WTC11 (cell line): ENCODE measurements at regions of chr6 and their contacts with region 1.

Region 1: DNA sequence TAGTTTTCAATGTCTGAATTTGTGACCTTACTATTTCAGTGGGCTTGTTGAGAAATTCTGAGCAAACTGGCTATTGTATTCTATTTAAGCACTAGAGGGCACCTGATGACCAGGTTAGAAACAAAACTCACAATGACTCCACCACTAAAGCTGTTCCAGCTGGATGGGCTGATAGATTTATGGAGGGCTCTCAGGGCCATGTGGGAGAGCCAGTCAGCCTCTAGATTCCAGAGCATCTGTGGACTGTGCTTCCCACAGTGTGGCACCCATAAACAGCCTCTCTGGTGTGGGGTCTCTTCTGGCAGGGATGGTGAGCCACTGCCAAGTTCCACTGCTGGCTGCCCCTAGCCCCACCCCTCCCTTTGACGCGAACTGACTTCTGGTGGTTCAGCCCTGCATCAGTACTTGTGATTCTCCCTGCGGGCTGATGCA is 29.2 kb downstream of the C6orf58 start:
- DNase-seq: peak; percentile 24
- ATAC-seq: peak; percentile 94
- H3K4me3 Mint-ChIP-seq: no peak overlapping the region
- H3K27ac Mint-ChIP-seq: no peak overlapping the region
- H3K4me1 Mint-ChIP-seq: no peaks in the 10 kb centered on the region
- H3K27me3 Mint-ChIP-seq: no peaks in the 10 kb centered on the region
- CTCF ChIP-seq: no peak

Region 2: GRCh38 chr6:125834348-125834747 is 1771.8 kb before region 1 on chr6:
- CTCF ChIA-PET with region 1: no interaction called
- POLR2A ChIA-PET with region 1: no interaction called
- DNase-seq: no peak
- ATAC-seq: no peak
- H3K4me3 Mint-ChIP-seq: no peak overlapping the region
- H3K27ac Mint-ChIP-seq: no peak overlapping the region
- H3K4me1 Mint-ChIP-seq: peaks cover 20% of the 10 kb centered on the region
- H3K27me3 Mint-ChIP-seq: no peaks in the 10 kb centered on the region
- CTCF ChIP-seq: no peak

Region 3: GRCh38 chr6:127266178-127266891 is 339.8 kb before region 1 on chr6 and contains the start of gene RNF146:
- CTCF ChIA-PET with region 1: no interaction called
- POLR2A ChIA-PET with region 1: no interaction called
- DNase-seq: peak; percentile 73
- ATAC-seq: peak; percentile 70
- H3K4me3 Mint-ChIP-seq: peak within 1 kb of the TSS; percentile 99
- H3K27ac Mint-ChIP-seq: peak within 1 kb of the TSS; percentile 100
- H3K4me1 Mint-ChIP-seq: peaks cover 29% of the 10 kb centered on the region
- H3K27me3 Mint-ChIP-seq: no peaks in the 10 kb centered on the region; the same call in 1 of the 2 replicates
- CTCF ChIP-seq: 0 out of 2 replicates have a peak, but pooled peaks have one; percentile 34
- total RNA-seq, gene RNF146: 27.3 to 30.4 TPM (median 30.0 TPM) in 3 replicates

Region 4: DNA sequence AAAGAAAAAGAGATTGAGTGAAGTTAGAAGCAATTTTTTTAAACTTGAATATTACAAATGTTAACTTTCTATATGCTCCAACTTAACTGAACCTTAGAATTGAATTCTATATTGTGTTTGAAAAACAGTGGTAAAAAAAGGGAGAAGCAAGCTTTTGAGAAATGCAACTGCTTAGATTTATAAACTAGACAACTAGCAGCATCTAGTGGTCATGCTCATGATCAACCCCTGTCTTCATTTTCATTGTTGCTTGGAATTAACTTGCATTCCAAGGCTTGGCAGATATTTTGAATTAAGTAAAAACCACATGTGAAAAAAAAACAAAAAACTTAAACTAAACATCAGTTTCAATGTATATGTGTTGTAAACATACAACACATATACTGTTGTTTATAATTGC is 83.9 kb after region 1 on chr6:
- CTCF ChIA-PET with region 1: interaction called, 14 read pairs
- POLR2A ChIA-PET with region 1: no interaction called
- DNase-seq: no peak
- ATAC-seq: peak; percentile 55; the same call in 1 of the 2 replicates
- H3K4me3 Mint-ChIP-seq: no peak overlapping the region
- H3K27ac Mint-ChIP-seq: no peak overlapping the region
- H3K4me1 Mint-ChIP-seq: peaks cover 6% of the 10 kb centered on the region
- H3K27me3 Mint-ChIP-seq: no peaks in the 10 kb centered on the region
- CTCF ChIP-seq: no peak; the same call in 1 of the 2 replicates